ENCODE measurements at regions of chr12 and their contacts with region 1.

Region 1: DNA sequence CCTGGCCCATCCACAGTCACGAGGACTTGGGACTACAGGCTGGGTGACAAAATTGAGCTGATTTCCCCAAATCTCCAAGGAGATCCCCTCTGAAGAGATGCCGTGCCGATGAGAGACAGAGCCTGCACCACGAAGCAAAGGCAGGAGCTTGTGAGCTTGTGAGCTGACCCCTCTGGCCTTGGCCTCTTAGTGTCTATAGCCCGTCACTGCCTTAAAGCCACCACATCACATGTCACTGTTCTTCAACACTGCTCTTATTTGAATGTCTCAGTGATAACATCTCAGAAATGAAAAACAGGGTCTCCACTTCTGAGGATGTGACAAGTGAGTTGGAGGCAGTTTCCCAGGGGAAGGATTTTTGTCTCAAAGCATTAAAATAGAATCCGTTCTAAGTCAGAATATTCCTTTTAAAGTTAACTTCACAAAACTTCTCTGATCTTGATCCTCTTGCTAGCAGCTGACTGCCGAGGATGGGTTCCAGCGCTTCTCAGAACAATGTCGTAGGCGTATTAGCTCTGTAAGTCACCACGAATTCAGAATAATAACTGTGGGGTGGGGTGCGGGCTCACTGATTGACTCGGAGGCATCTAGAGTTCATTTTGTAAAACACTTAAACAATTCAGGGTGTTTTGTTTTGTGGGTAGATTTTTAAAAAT is 37.5 kb downstream of the CHST11 start:
- DNase-seq: peak in 8 of 9 donors; percentile 31 to 51 (median 36)
- ATAC-seq: peak; percentile 51
- H3K4me3 ChIP-seq: peak overlapping the region; percentile 18
- H3K4me3 Mint-ChIP-seq: peak overlapping the region; percentile 18 to 88 (median 76)
- H3K27ac ChIP-seq: peak overlapping the region; percentile 42
- H3K27ac Mint-ChIP-seq: peak overlapping the region; percentile 78 to 93 (median 91)
- H3K4me1 ChIP-seq: peaks cover 72 to 85% of the 10 kb centered on the region in 2 donors
- H3K4me1 Mint-ChIP-seq: peaks cover 58 to 96% (median 86%) of the 10 kb centered on the region in 7 donors
- H3K27me3 ChIP-seq: no peaks in the 10 kb centered on the region
- H3K27me3 Mint-ChIP-seq: no peaks in the 10 kb centered on the region

Region 2: GRCh38 chr12:104450700-104451099 is 43.6 kb before region 1 on chr12:
- CTCF ChIA-PET with region 1: no interaction called
- POLR2A ChIA-PET with region 1: no interaction called
- intact Hi-C with region 1: no loop called
- DNase-seq: no peak
- ATAC-seq: no peak
- H3K4me3 ChIP-seq: no peak overlapping the region
- H3K4me3 Mint-ChIP-seq: no peak overlapping the region
- H3K27ac ChIP-seq: no peak overlapping the region
- H3K27ac Mint-ChIP-seq: no peak overlapping the region
- H3K4me1 ChIP-seq: peaks cover 0 to 2% of the 10 kb centered on the region in 2 donors
- H3K4me1 Mint-ChIP-seq: peaks cover 0 to 11% (median 4%) of the 10 kb centered on the region in 7 donors
- H3K27me3 ChIP-seq: no peaks in the 10 kb centered on the region
- H3K27me3 Mint-ChIP-seq: peaks cover 0 to 7% (median 0%) of the 10 kb centered on the region in 5 donors

Region 3: GRCh38 chr12:104508752-104509446 is 14.6 kb after region 1 on chr12:
- CTCF ChIA-PET with region 1: no interaction called
- POLR2A ChIA-PET with region 1: no interaction called
- intact Hi-C with region 1: loop called in 1 of 2 experiments (anchors 1 kb)
- DNase-seq: no peak
- ATAC-seq: no peak
- H3K4me3 ChIP-seq: no peak overlapping the region
- H3K4me3 Mint-ChIP-seq: peak overlapping the region in 1 of 10 donors; percentile 4
- H3K27ac ChIP-seq: no peak overlapping the region
- H3K27ac Mint-ChIP-seq: peak overlapping the region in 2 of 9 donors; percentile 6 to 8
- H3K4me1 ChIP-seq: peaks cover 24 to 25% of the 10 kb centered on the region in 2 donors
- H3K4me1 Mint-ChIP-seq: peaks cover 48 to 78% (median 65%) of the 10 kb centered on the region in 7 donors
- H3K27me3 ChIP-seq: no peaks in the 10 kb centered on the region
- H3K27me3 Mint-ChIP-seq: no peaks in the 10 kb centered on the region

Region 4: DNA sequence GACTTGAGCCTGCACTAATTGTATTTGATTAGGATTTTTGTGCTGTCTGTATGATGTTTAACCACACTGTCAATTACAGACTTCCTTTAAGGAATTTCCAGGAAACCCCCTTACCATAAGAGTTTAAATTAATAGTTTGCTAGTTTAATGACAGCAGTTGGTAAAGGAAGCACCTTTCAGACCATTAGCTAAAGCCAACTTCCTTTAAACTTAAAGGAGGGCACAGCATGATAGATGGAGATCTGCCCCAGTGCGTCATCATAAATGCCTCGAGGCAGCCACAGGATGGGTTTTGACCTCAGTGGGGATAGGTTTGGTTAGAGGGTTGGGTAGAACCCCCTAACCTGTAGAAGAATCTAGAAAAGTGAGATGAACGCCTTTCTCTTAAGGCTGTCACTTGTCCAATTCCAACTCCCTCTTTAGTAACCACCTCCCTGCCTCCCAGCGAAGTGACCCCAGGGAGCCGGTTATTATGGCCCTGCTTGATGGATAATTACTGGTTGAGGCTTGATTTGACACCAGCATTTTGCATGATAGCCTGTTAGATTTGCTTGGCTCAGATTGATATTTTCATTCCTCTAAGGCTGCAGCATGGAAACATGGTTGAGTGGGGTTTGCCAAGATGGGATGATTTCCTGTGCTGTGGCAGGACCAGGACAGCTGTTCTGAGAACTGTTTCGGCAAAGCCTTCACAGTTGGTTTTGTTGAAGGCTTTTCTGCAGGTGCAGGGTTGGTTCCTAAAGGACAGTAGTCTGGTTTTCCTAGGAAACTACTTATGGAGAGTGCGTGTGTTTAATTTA is 25.1 kb after region 1 on chr12:
- CTCF ChIA-PET with region 1: no interaction called
- POLR2A ChIA-PET with region 1: no interaction called
- intact Hi-C with region 1: loop called in 1 of 2 experiments (anchors 2 kb)
- DNase-seq: no peak
- ATAC-seq: peak; percentile 86
- H3K4me3 ChIP-seq: no peak overlapping the region
- H3K4me3 Mint-ChIP-seq: peak overlapping the region in 2 of 10 donors; percentile 42 to 50
- H3K27ac ChIP-seq: no peak overlapping the region
- H3K27ac Mint-ChIP-seq: peak overlapping the region in 5 of 9 donors; percentile 22 to 62 (median 37)
- H3K4me1 ChIP-seq: peaks cover 25 to 41% of the 10 kb centered on the region in 2 donors
- H3K4me1 Mint-ChIP-seq: peaks cover 63 to 96% (median 86%) of the 10 kb centered on the region in 7 donors
- H3K27me3 ChIP-seq: no peaks in the 10 kb centered on the region
- H3K27me3 Mint-ChIP-seq: no peaks in the 10 kb centered on the region

Region 5: DNA sequence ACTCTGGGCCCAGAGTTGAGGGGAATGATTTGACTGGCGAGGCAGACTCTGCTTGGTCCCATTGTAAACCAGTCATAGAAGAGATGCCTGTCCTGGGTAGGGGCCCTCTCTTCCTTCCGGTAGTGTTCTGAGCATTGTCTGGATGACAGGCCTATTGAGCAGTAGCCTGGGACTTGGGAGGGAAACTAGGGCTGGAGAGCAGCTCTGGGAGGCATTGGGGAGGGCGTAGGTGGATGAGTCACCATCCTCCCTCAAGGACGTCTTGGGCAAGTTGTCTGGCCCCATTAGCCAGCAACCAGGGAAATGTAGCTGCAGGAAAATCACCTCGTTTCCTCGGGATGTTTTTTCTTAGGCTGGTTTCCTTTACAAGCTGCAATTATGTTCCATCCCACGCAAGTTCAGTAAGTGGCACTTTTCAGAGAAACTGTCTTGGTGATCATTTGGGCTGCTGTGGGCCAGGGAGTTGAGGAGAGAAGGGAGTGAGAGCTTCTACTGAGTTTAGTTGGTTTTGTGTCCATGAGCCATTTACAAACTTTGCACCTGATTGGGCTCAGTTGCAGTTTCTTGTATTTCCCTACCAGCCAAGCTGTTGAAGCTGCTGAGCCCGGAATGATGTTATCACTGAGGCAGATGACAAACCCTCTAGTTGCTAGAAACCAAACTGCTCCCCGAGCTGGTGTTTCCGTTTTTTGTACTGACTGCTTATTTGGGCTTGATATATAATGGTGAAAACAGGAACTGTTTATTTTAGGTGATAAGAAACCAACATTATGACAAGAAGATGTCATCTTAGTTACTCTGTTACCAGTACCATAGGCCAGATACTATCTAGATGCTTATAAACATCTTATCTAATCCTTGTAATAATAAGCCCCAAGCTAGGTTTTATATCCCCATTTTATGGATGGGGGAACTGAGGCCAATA is 110.1 kb after region 1 on chr12:
- CTCF ChIA-PET with region 1: no interaction called
- POLR2A ChIA-PET with region 1: no interaction called
- intact Hi-C with region 1: loop called in 1 of 2 experiments (anchors 5 kb)
- DNase-seq: peak in 5 of 9 donors; percentile 7 to 54 (median 13)
- ATAC-seq: peak; percentile 82
- H3K4me3 ChIP-seq: no peak overlapping the region
- H3K4me3 Mint-ChIP-seq: peak overlapping the region in 4 of 10 donors; percentile 23 to 66 (median 28)
- H3K27ac ChIP-seq: no peak overlapping the region
- H3K27ac Mint-ChIP-seq: peak overlapping the region in 8 of 9 donors; percentile 15 to 91 (median 43)
- H3K4me1 ChIP-seq: peaks cover 10 to 16% of the 10 kb centered on the region in 2 donors
- H3K4me1 Mint-ChIP-seq: peaks cover 37 to 79% (median 64%) of the 10 kb centered on the region in 7 donors
- H3K27me3 ChIP-seq: no peaks in the 10 kb centered on the region
- H3K27me3 Mint-ChIP-seq: no peaks in the 10 kb centered on the region

Region 6: GRCh38 chr12:104671407-104672098 is 177.3 kb after region 1 on chr12:
- CTCF ChIA-PET with region 1: no interaction called
- POLR2A ChIA-PET with region 1: no interaction called
- intact Hi-C with region 1: loop called in 1 of 2 experiments (anchors 2 kb)
- DNase-seq: peak in 3 of 9 donors; percentile 30 to 80 (median 58)
- ATAC-seq: peak; percentile 80
- H3K4me3 ChIP-seq: no peak overlapping the region
- H3K4me3 Mint-ChIP-seq: peak overlapping the region in 7 of 10 donors; percentile 6 to 67 (median 21)
- H3K27ac ChIP-seq: no peak overlapping the region
- H3K27ac Mint-ChIP-seq: peak overlapping the region in 7 of 9 donors; percentile 11 to 92 (median 67)
- H3K4me1 ChIP-seq: peaks cover 25 to 36% of the 10 kb centered on the region in 2 donors
- H3K4me1 Mint-ChIP-seq: peaks cover 32 to 64% (median 48%) of the 10 kb centered on the region in 7 donors
- H3K27me3 ChIP-seq: no peaks in the 10 kb centered on the region
- H3K27me3 Mint-ChIP-seq: no peaks in the 10 kb centered on the region